B cell (primary cell): ENCODE measurements at regions of chr1 and their contacts with region 1.

Region 1: GRCh38 chr1:175319418-175320230 is 127.0 kb upstream of the KIAA0040 start:
- DNase-seq: peak; percentile 83
- ATAC-seq: peak; percentile 88
- H3K4me3 ChIP-seq: peak overlapping the region in 3 of 5 experiments; percentile 15 to 49 (median 27)
- H3K4me3 Mint-ChIP-seq: peak overlapping the region; percentile 80
- H3K27ac ChIP-seq: peak overlapping the region in 1 of 2 donors; percentile 20
- H3K27ac Mint-ChIP-seq: peak overlapping the region; percentile 75
- H3K4me1 ChIP-seq: peaks cover 6 to 14% of the 10 kb centered on the region in 2 donors
- H3K4me1 Mint-ChIP-seq: peaks cover 26% of the 10 kb centered on the region
- H3K27me3 ChIP-seq: peaks cover 0 to 3% (median 0%) of the 10 kb centered on the region in 4 experiments
- H3K27me3 Mint-ChIP-seq: no peaks in the 10 kb centered on the region
- CTCF ChIP-seq: peak; percentile 91

Region 2: DNA sequence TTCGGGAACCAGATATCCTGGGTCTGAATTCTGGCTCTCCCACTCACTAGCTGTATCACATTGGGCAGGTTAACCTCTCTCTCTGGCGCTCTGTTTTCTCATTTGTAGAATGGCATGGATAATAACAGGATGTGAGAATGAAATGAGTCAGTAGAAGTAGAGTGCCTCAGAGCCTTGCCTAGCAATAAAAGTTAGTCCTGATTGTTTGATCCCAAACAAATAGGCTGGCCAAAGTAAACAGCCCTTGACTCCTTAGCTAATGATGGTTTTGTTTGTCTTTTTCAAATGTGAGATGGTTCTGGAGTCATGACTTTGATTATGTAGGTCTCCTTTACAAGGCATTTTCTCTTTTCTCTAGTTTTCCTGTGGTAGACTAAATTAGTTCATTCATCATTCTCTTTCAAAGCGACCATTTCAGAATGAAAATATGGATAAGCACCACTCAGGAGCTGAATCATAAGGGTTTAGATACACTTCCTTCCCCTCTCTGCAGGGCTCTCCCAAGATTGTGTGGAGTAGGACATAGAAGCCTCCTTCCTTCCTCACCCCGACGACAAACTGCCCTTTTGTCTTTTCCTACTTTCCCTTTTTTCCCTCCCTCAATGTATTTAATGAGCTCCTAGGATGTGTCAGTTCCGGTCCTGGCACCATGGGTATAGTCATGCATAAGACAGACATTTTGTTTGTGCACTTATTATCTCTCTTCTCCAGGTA is 150.2 kb before region 1 on chr1:
- CTCF ChIA-PET with region 1: interaction called, 93 read pairs
- POLR2A ChIA-PET with region 1: no interaction called
- intact Hi-C with region 1: no loop called
- DNase-seq: no peak
- ATAC-seq: no peak
- H3K4me3 ChIP-seq: no peak overlapping the region
- H3K4me3 Mint-ChIP-seq: no peak overlapping the region
- H3K27ac ChIP-seq: peak overlapping the region in 1 of 2 donors; percentile 40
- H3K27ac Mint-ChIP-seq: peak overlapping the region; percentile 77
- H3K4me1 ChIP-seq: peaks cover 23 to 25% of the 10 kb centered on the region in 2 donors
- H3K4me1 Mint-ChIP-seq: peaks cover 67% of the 10 kb centered on the region
- H3K27me3 ChIP-seq: no peaks in the 10 kb centered on the region
- H3K27me3 Mint-ChIP-seq: no peaks in the 10 kb centered on the region
- CTCF ChIP-seq: no peak

Region 3: DNA sequence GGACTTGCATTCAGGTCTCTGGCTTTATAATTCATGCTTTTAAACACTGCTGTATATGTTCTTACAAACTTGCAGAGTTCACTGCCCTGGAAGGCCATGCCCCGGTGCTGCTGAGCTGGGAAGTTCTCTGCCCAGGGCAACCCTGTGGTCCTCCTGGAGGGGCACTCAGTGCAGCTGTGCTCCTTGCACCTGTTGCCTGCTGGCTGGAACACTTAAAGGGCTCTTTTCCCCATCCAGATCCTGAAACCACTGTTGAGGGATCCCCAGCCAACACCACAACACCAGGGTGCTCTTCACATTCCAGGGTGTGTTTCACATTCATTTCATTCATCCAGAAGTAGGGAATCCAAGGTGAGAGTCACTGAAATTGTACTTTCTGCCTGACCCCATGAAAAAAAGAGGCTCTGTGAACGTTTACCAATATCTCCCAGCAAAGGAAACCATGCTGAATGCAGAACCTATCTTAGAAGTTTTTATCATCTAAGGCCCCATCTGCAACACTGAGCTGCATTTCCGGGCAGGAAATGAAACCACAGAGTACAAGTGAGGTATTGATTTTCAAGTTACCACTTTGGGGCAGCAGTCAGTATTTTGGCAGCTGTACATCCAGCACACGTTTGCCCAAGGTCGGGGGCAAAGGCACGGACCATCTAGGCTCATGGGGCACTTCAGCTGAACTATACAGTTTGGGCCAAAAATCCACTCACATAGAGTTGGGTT is 110.7 kb before region 1 on chr1:
- CTCF ChIA-PET with region 1: interaction called, 32 read pairs
- POLR2A ChIA-PET with region 1: no interaction called
- intact Hi-C with region 1: no loop called
- DNase-seq: peak; percentile 75
- ATAC-seq: peak; percentile 92
- H3K4me3 ChIP-seq: peak overlapping the region in 2 of 5 experiments; percentile 5 to 47
- H3K4me3 Mint-ChIP-seq: peak overlapping the region; percentile 86
- H3K27ac ChIP-seq: peak overlapping the region; percentile 86 to 88
- H3K27ac Mint-ChIP-seq: peak overlapping the region; percentile 99
- H3K4me1 ChIP-seq: peaks cover 45 to 60% of the 10 kb centered on the region in 2 donors
- H3K4me1 Mint-ChIP-seq: peaks cover 69% of the 10 kb centered on the region
- H3K27me3 ChIP-seq: no peaks in the 10 kb centered on the region
- H3K27me3 Mint-ChIP-seq: no peaks in the 10 kb centered on the region
- CTCF ChIP-seq: no peak

Region 4: GRCh38 chr1:175267716-175268384 is 51.8 kb before region 1 on chr1:
- CTCF ChIA-PET with region 1: interaction called, 5 read pairs
- POLR2A ChIA-PET with region 1: no interaction called
- intact Hi-C with region 1: loop called (anchors 10 kb)
- DNase-seq: no peak
- ATAC-seq: no peak
- H3K4me3 ChIP-seq: no peak overlapping the region
- H3K4me3 Mint-ChIP-seq: no peak overlapping the region
- H3K27ac ChIP-seq: no peak overlapping the region
- H3K27ac Mint-ChIP-seq: no peak overlapping the region
- H3K4me1 ChIP-seq: no peaks in the 10 kb centered on the region
- H3K4me1 Mint-ChIP-seq: no peaks in the 10 kb centered on the region
- H3K27me3 ChIP-seq: no peaks in the 10 kb centered on the region
- H3K27me3 Mint-ChIP-seq: peaks cover under 1% of the 10 kb centered on the region
- CTCF ChIP-seq: no peak

Region 5: DNA sequence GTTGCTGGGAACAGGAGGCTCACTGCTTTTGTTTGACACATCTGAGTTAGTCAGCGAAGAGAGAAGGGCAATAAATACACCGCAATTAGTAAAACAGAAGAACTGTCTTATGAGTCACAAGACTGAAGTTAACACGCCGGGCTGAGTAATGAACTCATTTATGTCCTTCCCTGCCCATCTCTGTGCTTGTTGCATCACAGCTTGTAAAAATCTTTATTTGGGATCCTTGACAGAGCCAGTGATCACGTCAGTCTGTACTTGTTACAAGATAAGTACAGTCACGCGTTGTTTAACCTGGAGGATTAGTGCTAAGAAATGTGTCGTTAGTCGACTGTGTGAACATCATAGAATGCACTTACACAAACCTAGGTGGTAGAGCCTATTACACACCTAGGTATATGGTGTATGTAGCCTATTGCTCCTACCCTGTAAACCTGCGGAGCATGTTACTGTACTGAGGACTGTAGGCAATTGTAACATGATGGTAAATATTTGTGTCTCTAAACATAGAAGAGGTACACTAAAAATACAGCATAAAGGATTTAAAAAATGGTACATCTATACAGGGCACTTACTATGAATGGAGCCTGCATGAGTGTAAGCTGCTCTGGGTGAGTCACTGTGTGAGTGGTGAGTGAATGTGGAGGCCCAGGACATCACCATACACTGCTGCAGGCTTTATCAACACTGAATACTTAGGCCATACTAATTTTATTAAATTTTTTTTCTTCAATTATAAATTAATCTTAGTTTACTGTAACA is 151.6 kb after region 1 on chr1:
- CTCF ChIA-PET with region 1: no interaction called
- POLR2A ChIA-PET with region 1: no interaction called
- intact Hi-C with region 1: no loop called
- DNase-seq: no peak
- ATAC-seq: no peak
- H3K4me3 ChIP-seq: no peak overlapping the region
- H3K4me3 Mint-ChIP-seq: no peak overlapping the region
- H3K27ac ChIP-seq: no peak overlapping the region
- H3K27ac Mint-ChIP-seq: no peak overlapping the region
- H3K4me1 ChIP-seq: no peaks in the 10 kb centered on the region
- H3K4me1 Mint-ChIP-seq: no peaks in the 10 kb centered on the region
- H3K27me3 ChIP-seq: no peaks in the 10 kb centered on the region
- H3K27me3 Mint-ChIP-seq: peaks cover 12% of the 10 kb centered on the region
- CTCF ChIP-seq: no peak